Naive thymus-derived CD4-positive, alpha-beta T cell (primary cell): ENCODE measurements at regions of chr4 and their contacts with region 1.

Region 1: GRCh38 chr4:75673027-75673958 is at the start of gene G3BP2:
- DNase-seq: peak; percentile 87 to 99 (median 97)
- ATAC-seq: peak; percentile 97
- H3K4me3 ChIP-seq: peak within 1 kb of the TSS; percentile 91
- H3K4me3 Mint-ChIP-seq: peak within 1 kb of the TSS; percentile 96 to 100 (median 98)
- H3K27ac ChIP-seq: peak within 1 kb of the TSS; percentile 96
- H3K27ac Mint-ChIP-seq: peak within 1 kb of the TSS; percentile 92 to 100 (median 99)
- H3K4me1 ChIP-seq: peaks cover 38 to 43% of the 10 kb centered on the region in 2 donors
- H3K4me1 Mint-ChIP-seq: peaks cover 36 to 47% (median 44%) of the 10 kb centered on the region in 7 donors
- H3K27me3 ChIP-seq: no peaks in the 10 kb centered on the region
- H3K27me3 Mint-ChIP-seq: no peaks in the 10 kb centered on the region
- total RNA-seq, gene G3BP2: 161 to 299 (median 167) TPM

Region 2: GRCh38 chr4:74410272-74410671 is 1263.0 kb before region 1 on chr4:
- CTCF ChIA-PET with region 1: no interaction called
- POLR2A ChIA-PET with region 1: no interaction called
- intact Hi-C with region 1: no loop called
- DNase-seq: no peak
- ATAC-seq: no peak
- H3K4me3 ChIP-seq: no peak overlapping the region
- H3K4me3 Mint-ChIP-seq: no peak overlapping the region
- H3K27ac ChIP-seq: no peak overlapping the region
- H3K27ac Mint-ChIP-seq: no peak overlapping the region
- H3K4me1 ChIP-seq: no peaks in the 10 kb centered on the region
- H3K4me1 Mint-ChIP-seq: no peaks in the 10 kb centered on the region
- H3K27me3 ChIP-seq: no peaks in the 10 kb centered on the region
- H3K27me3 Mint-ChIP-seq: peaks cover 0 to 8% (median 0%) of the 10 kb centered on the region in 5 donors

Region 3: GRCh38 chr4:75630174-75630936 is 42.9 kb before region 1 on chr4 and contains the start of gene CDKL2:
- CTCF ChIA-PET with region 1: no interaction called
- POLR2A ChIA-PET with region 1: interaction called, 4 read pairs
- intact Hi-C with region 1: loop called (anchors 1 kb)
- DNase-seq: peak; percentile 85 to 93 (median 91)
- ATAC-seq: peak; percentile 100
- H3K4me3 ChIP-seq: peak within 1 kb of the TSS; percentile 74
- H3K4me3 Mint-ChIP-seq: peak within 1 kb of the TSS; percentile 88 to 97 (median 94)
- H3K27ac ChIP-seq: peak within 1 kb of the TSS; percentile 73
- H3K27ac Mint-ChIP-seq: peak within 1 kb of the TSS; percentile 66 to 94 (median 86)
- H3K4me1 ChIP-seq: peaks cover 0 to 7% of the 10 kb centered on the region in 2 donors
- H3K4me1 Mint-ChIP-seq: peaks cover 6 to 18% (median 11%) of the 10 kb centered on the region in 7 donors
- H3K27me3 ChIP-seq: no peaks in the 10 kb centered on the region
- H3K27me3 Mint-ChIP-seq: peaks cover 0 to 12% (median 0%) of the 10 kb centered on the region in 5 donors
- total RNA-seq, gene CDKL2: 0.22 to 1.2 (median 0.34) TPM

Region 4: DNA sequence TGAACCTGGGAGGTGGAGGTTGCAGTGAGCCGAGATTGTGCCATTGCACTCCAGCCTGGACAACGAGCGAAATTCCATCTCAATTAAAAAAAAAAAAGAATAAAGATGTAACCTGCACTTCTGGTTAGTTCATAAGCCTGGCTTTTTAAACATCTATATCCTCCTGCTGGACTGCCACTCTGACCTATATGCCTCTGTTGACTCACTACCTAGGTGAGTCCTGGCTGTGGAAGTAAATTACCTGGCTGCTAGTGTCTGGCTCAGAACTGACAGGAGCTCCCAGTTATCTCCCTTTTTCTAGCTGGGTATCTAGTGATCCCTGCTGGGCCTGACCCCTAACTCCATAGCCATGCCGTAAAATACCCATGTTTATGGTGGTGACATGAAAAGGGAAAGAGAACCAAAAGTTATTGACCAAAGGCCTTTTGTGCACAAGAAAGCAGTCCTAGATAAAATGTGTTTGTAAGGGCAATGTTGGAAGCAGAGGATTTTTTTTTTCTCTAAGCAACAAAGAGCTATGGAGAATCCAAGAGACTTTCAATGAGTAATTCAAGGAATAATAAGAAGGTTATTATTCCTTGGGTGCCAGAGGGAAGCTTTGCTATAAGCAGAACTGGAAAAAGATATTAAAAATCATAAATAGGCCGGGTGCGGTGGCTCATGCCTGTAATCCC is 10.3 kb after region 1 on chr4:
- CTCF ChIA-PET with region 1: interaction called, 3 read pairs
- POLR2A ChIA-PET with region 1: interaction called, 13 read pairs
- intact Hi-C with region 1: loop called in 1 of 2 experiments (anchors 1 kb)
- DNase-seq: no peak
- ATAC-seq: no peak
- H3K4me3 ChIP-seq: no peak overlapping the region
- H3K4me3 Mint-ChIP-seq: peak overlapping the region in 3 of 10 donors; percentile 11 to 67 (median 29)
- H3K27ac ChIP-seq: no peak overlapping the region
- H3K27ac Mint-ChIP-seq: peak overlapping the region in 8 of 9 donors; percentile 45 to 91 (median 83)
- H3K4me1 ChIP-seq: peaks cover 18 to 24% of the 10 kb centered on the region in 2 donors
- H3K4me1 Mint-ChIP-seq: peaks cover 10 to 47% (median 31%) of the 10 kb centered on the region in 7 donors
- H3K27me3 ChIP-seq: no peaks in the 10 kb centered on the region
- H3K27me3 Mint-ChIP-seq: no peaks in the 10 kb centered on the region

Region 5: GRCh38 chr4:75708218-75708691 is 35.0 kb after region 1 on chr4:
- CTCF ChIA-PET with region 1: no interaction called
- POLR2A ChIA-PET with region 1: interaction called, 3 read pairs
- intact Hi-C with region 1: loop called (anchors 1 kb)
- DNase-seq: peak in 7 of 9 donors; percentile 49 to 72 (median 52)
- ATAC-seq: peak; percentile 93
- H3K4me3 ChIP-seq: no peak overlapping the region
- H3K4me3 Mint-ChIP-seq: no peak overlapping the region
- H3K27ac ChIP-seq: no peak overlapping the region
- H3K27ac Mint-ChIP-seq: peak overlapping the region in 7 of 9 donors; percentile 19 to 81 (median 56)
- H3K4me1 ChIP-seq: no peaks in the 10 kb centered on the region
- H3K4me1 Mint-ChIP-seq: peaks cover 0 to 13% (median 5%) of the 10 kb centered on the region in 7 donors
- H3K27me3 ChIP-seq: no peaks in the 10 kb centered on the region
- H3K27me3 Mint-ChIP-seq: no peaks in the 10 kb centered on the region

Region 6: GRCh38 chr4:75779105-75779757 is 105.9 kb after region 1 on chr4:
- CTCF ChIA-PET with region 1: no interaction called
- POLR2A ChIA-PET with region 1: no interaction called
- intact Hi-C with region 1: no loop called
- DNase-seq: no peak
- ATAC-seq: no peak
- H3K4me3 ChIP-seq: no peak overlapping the region
- H3K4me3 Mint-ChIP-seq: no peak overlapping the region
- H3K27ac ChIP-seq: no peak overlapping the region
- H3K27ac Mint-ChIP-seq: peak overlapping the region in 1 of 9 donors; percentile 35
- H3K4me1 ChIP-seq: no peaks in the 10 kb centered on the region
- H3K4me1 Mint-ChIP-seq: peaks cover 0 to 11% (median 0%) of the 10 kb centered on the region in 7 donors
- H3K27me3 ChIP-seq: no peaks in the 10 kb centered on the region
- H3K27me3 Mint-ChIP-seq: no peaks in the 10 kb centered on the region

Region 7: DNA sequence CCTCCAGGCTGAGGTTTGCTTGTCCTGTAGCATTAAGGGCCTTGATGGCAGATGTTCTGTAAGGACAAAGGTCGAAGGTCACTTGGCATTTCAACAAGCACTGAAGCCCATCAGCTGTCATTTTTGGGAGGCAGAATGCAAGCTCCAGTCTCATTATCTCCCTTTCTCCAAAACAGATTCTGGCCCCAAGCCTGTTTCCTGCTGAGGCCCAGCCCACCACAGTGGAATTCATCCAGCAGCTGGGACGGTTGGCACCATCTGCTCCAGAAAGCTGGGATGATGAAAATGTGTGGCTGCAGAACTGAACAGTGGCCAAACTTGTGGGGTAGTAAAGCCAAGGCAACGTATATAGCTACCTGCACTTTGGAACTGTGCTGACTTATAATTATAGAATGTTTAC is 246.6 kb after region 1 on chr4:
- CTCF ChIA-PET with region 1: no interaction called
- POLR2A ChIA-PET with region 1: no interaction called
- intact Hi-C with region 1: no loop called
- DNase-seq: no peak
- ATAC-seq: no peak
- H3K4me3 ChIP-seq: no peak overlapping the region
- H3K4me3 Mint-ChIP-seq: no peak overlapping the region
- H3K27ac ChIP-seq: no peak overlapping the region
- H3K27ac Mint-ChIP-seq: no peak overlapping the region
- H3K4me1 ChIP-seq: no peaks in the 10 kb centered on the region
- H3K4me1 Mint-ChIP-seq: peaks cover 0 to 6% (median 0%) of the 10 kb centered on the region in 7 donors
- H3K27me3 ChIP-seq: no peaks in the 10 kb centered on the region
- H3K27me3 Mint-ChIP-seq: no peaks in the 10 kb centered on the region

Region 8: GRCh38 chr4:76148142-76148865 is 475.0 kb after region 1 on chr4 and contains the start of gene NUP54:
- CTCF ChIA-PET with region 1: no interaction called
- POLR2A ChIA-PET with region 1: no interaction called
- intact Hi-C with region 1: loop called (anchors 1 kb)
- DNase-seq: peak; percentile 85 to 96 (median 92)
- ATAC-seq: peak; percentile 99
- H3K4me3 ChIP-seq: peak within 1 kb of the TSS; percentile 85
- H3K4me3 Mint-ChIP-seq: peak within 1 kb of the TSS; percentile 90 to 100 (median 96)
- H3K27ac ChIP-seq: peak within 1 kb of the TSS; percentile 93
- H3K27ac Mint-ChIP-seq: peak within 1 kb of the TSS; percentile 91 to 99 (median 94)
- H3K4me1 ChIP-seq: peaks cover 12% of the 10 kb centered on the region in 2 donors
- H3K4me1 Mint-ChIP-seq: peaks cover 21 to 52% (median 45%) of the 10 kb centered on the region in 7 donors
- H3K27me3 ChIP-seq: no peaks in the 10 kb centered on the region
- H3K27me3 Mint-ChIP-seq: no peaks in the 10 kb centered on the region
- total RNA-seq, gene NUP54: 51.1 to 82.0 (median 65.5) TPM